ENCODE measurements at regions of chr1 and their contacts with region 1.

Region 1: DNA sequence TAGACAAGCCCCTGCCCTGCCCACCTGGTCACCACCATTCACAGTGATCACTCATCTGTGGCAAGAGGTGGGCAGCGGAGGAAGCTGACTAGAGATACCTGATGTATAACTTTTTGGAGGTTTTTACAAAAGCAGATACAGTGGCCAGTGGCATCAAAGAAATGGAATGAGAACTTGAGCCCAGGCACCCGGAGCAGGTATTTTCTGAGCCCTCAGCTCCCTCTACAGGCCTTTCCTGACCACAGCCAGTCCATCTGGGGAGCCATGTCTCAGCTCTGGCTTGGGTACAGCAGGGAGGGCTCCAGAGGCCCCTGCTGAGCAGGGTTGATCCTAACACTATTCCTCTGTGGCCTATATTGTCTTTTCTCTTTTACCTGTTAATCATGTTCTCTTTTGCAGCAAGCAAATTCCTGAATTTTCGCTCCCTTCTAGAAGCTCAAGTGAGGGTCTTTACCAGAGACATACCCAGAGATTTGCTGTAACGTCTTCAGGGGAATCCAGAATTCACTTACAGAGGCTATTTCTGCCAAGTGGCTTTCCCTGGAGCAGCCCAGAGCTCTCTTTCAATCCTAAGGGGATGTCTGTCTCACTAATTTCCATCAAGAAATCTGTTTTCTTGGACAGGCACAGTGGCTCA is 27.3 kb downstream of the GPR157 start:
- DNase-seq: peak; percentile 55
- ATAC-seq: peak; percentile 81
- H3K4me3 ChIP-seq: no peak overlapping the region
- H3K27ac ChIP-seq: no peak overlapping the region
- H3K4me1 ChIP-seq: peaks cover 38% of the 10 kb centered on the region
- H3K27me3 ChIP-seq: no peaks in the 10 kb centered on the region
- CTCF ChIP-seq: peak; percentile 83
- EP300 ChIP-seq: no peak
- POLR2A ChIP-seq: no peak
- RAD21 ChIP-seq: peak; percentile 70

Region 2: GRCh38 chr1:8915446-8915845 is 186.2 kb before region 1 on chr1:
- CTCF ChIA-PET with region 1: no interaction called
- POLR2A ChIA-PET with region 1: no interaction called
- in situ Hi-C with region 1: no loop called
- intact Hi-C with region 1: loop called (anchors 5 kb)
- DNase-seq: no peak
- ATAC-seq: no peak
- H3K4me3 ChIP-seq: no peak overlapping the region
- H3K27ac ChIP-seq: no peak overlapping the region
- H3K4me1 ChIP-seq: peaks cover 70% of the 10 kb centered on the region
- H3K27me3 ChIP-seq: no peaks in the 10 kb centered on the region; a peak in 1 of 5 replicates
- CTCF ChIP-seq: no peak
- EP300 ChIP-seq: no peak
- POLR2A ChIP-seq: no peak
- RAD21 ChIP-seq: no peak

Region 3: GRCh38 chr1:8987881-8988617 is 113.6 kb before region 1 on chr1:
- CTCF ChIA-PET with region 1: no interaction called
- POLR2A ChIA-PET with region 1: no interaction called
- in situ Hi-C with region 1: no loop called
- intact Hi-C with region 1: no loop called
- DNase-seq: no peak
- ATAC-seq: peak; percentile 72
- H3K4me3 ChIP-seq: peak overlapping the region in 1 of 3 experiments; percentile 51; a peak in 1 of 6 replicates
- H3K27ac ChIP-seq: no peak overlapping the region
- H3K4me1 ChIP-seq: peaks cover 57% of the 10 kb centered on the region
- H3K27me3 ChIP-seq: peaks cover 0 to 8% of the 10 kb centered on the region in 2 experiments; a peak in 1 of 5 replicates
- CTCF ChIP-seq: peak; percentile 83
- EP300 ChIP-seq: no peak
- POLR2A ChIP-seq: no peak
- RAD21 ChIP-seq: 0 out of 2 replicates have a peak, but pooled peaks have one; percentile 37